Sigmoid colon (tissue), 7 donors: ENCODE measurements at regions of chr5 and their contacts with region 1.

Region 1: GRCh38 chr5:42889311-42889933 is 77.7 kb upstream of the SELENOP start:
- DNase-seq: peak; percentile 83
- H3K4me3 ChIP-seq: no peak overlapping the region
- H3K27ac ChIP-seq: no peak overlapping the region
- H3K4me1 ChIP-seq: no peaks in the 10 kb centered on the region
- H3K27me3 ChIP-seq: no peaks in the 10 kb centered on the region
- CTCF ChIP-seq: peak; percentile 34 to 80 (median 70)
- EP300 ChIP-seq: no peak
- POLR2A ChIP-seq: no peak

Region 2: DNA sequence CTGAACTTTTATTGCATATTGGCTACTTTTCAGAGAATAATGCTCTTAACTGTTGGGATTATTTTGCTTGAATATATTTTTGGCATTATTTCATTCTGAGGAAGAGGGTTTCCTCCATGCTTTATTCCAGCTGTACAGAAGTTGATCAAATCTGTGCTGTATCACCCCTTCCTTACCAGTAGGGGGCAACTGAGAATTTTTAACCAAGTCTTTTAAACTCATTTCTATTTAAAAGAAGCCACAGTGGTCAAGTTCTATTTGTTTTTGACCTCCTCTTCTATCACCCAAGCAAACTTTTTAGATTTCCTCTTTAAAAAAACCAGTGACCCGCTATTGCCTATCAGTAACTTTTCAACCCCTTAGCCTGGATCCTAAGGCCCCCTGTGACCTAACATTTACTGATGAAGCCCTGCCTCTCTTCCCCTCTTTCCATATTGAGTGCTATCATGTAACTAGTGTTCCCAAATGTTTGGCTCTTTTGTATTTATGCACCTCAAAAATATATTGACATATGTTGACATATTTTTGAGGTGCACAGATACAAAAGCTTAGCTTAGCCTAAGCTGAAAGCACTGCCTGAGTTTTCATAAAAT is 883.8 kb before region 1 on chr5:
- intact Hi-C with region 1: loop called (anchors 5 kb)
- DNase-seq: no peak
- H3K4me3 ChIP-seq: no peak overlapping the region
- H3K27ac ChIP-seq: no peak overlapping the region
- H3K4me1 ChIP-seq: no peaks in the 10 kb centered on the region
- H3K27me3 ChIP-seq: no peaks in the 10 kb centered on the region
- CTCF ChIP-seq: peak; percentile 18 to 61 (median 48)
- EP300 ChIP-seq: no peak
- POLR2A ChIP-seq: no peak

Region 3: GRCh38 chr5:42807722-42808447 is 81.5 kb before region 1 on chr5:
- intact Hi-C with region 1: loop called (anchors 10 kb)
- DNase-seq: no peak
- H3K4me3 ChIP-seq: peak overlapping the region in 2 of 4 donors; percentile 2 to 51
- H3K27ac ChIP-seq: peak overlapping the region in 2 of 4 donors; percentile 1 to 77
- H3K4me1 ChIP-seq: peaks cover 0 to 16% (median 8%) of the 10 kb centered on the region in 4 donors
- H3K27me3 ChIP-seq: no peaks in the 10 kb centered on the region
- CTCF ChIP-seq: no peak
- EP300 ChIP-seq: no peak
- POLR2A ChIP-seq: no peak